ENCODE measurements at regions of chr12 and their contacts with region 1.

Region 1: GRCh38 chr12:94126067-94126466 is 22.3 kb upstream of the PLXNC1 start:
- DNase-seq: no peak
- ATAC-seq: no peak
- H3K4me3 ChIP-seq: no peak overlapping the region
- H3K27ac ChIP-seq: no peak overlapping the region
- H3K4me1 ChIP-seq: no peaks in the 10 kb centered on the region
- H3K27me3 ChIP-seq: no peaks in the 10 kb centered on the region
- CTCF ChIP-seq: no peak
- POLR2A ChIP-seq: no peak

Region 2: DNA sequence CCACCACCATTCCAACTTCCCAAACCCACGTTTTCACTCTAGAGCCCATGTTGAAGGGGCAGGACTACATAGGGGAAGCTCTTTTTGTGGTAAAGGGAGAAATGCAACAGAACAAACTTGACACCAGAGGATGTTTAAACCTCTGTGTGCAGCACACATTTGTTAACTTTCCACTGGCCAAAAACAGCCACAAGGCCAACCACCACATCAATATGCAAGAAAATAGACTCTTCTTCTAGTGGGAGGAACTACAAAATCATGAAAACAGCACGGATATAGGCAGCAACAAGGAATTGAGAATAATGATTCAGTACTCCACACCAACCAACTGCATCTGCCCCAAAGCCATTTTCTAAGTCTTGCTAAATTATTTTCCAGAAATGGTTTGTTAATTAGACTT is 399.9 kb after region 1 on chr12:
- intact Hi-C with region 1: loop called (anchors 5 kb)
- DNase-seq: no peak
- ATAC-seq: no peak
- H3K4me3 ChIP-seq: no peak overlapping the region
- H3K27ac ChIP-seq: no peak overlapping the region
- H3K4me1 ChIP-seq: no peaks in the 10 kb centered on the region
- H3K27me3 ChIP-seq: no peaks in the 10 kb centered on the region
- CTCF ChIP-seq: no peak
- POLR2A ChIP-seq: no peak